WTC11 (cell line): ENCODE measurements at regions of chr19 and their contacts with region 1.

Region 1: DNA sequence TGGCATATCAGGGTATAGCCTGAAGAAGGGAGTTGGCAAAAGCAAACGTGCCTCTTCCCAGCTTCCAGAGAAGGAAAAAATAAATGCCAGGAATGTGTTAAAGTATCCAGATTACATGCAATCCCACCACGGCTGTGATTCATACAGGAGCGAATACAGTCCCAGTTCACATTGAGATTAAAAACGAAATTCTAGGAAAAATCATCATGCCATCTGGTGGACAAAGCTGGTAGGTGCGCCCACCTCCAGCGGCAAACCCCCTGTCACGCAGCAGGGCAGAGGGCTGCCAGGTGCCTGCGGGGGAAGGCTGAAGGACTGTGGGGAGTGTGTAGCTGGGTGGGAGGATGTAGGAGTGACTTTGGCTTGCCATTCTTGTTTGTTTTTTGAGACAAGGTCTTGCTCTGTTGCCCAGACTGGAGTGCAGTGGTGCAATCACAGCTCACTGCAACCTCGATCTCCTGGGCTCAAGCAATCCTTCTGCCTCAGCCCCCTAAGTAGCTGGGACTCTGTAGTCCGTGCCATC is 6.4 kb upstream of the DMWD start:
- DNase-seq: peak; percentile 75
- ATAC-seq: peak; percentile 86
- H3K4me3 Mint-ChIP-seq: no peak overlapping the region; the same call in 1 of the 2 replicates
- H3K27ac Mint-ChIP-seq: no peak overlapping the region
- H3K4me1 Mint-ChIP-seq: peaks cover 6% of the 10 kb centered on the region
- H3K27me3 Mint-ChIP-seq: peaks cover 57% of the 10 kb centered on the region
- CTCF ChIP-seq: peak; percentile 71

Region 2: DNA sequence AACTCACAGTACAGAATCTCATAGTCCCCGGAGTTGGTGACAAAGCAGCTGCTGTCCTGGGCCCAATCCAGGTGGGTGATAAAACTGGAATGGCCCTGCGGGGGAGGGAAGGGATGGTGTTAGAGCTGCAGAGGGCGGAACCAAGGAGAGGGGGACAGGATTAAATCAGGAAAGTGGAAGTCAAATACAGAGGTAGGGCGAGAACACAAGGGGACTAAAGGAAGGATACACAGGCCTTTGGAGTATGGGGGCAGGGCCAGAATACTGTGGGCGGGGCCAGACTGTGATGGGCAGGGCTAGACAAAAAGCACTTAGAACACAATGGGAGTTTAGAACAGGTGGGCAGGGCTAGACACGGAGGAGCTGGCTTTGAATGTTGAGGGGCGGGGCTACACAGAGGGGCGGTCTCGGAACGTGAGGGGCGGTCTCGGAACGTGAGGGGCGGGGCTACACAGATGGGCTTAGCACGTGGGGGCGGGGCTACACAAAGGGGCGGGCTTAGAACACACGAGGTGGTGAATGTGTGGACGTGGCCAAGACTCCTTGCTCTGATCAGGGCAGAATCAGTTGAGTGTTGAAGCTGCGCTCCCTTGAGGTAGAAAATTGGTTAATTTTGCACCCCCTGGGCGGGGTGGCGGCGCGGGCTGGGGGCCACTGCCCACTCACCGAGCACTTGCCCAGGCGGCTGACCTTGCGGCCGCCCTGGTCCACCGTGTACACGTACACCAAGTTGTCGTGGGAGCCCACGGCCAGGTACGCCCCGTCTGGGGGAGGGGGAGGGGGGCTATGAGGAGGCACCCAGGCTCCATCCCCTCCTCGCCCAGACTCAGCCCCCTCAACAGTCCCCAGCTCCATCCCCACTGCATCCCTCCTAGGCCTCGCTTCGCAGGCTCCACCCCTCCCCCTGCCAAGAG is 183.0 kb before region 1 on chr19:
- CTCF ChIA-PET with region 1: no interaction called
- POLR2A ChIA-PET with region 1: no interaction called
- DNase-seq: peak; percentile 99
- ATAC-seq: peak; percentile 96
- H3K4me3 Mint-ChIP-seq: peak overlapping the region; percentile 86
- H3K27ac Mint-ChIP-seq: peak overlapping the region; percentile 99
- H3K4me1 Mint-ChIP-seq: 0 out of 2 replicates have a peak, but pooled peaks cover 7% of the 10 kb centered on the region
- H3K27me3 Mint-ChIP-seq: no peaks in the 10 kb centered on the region
- CTCF ChIP-seq: no peak

Region 3: DNA sequence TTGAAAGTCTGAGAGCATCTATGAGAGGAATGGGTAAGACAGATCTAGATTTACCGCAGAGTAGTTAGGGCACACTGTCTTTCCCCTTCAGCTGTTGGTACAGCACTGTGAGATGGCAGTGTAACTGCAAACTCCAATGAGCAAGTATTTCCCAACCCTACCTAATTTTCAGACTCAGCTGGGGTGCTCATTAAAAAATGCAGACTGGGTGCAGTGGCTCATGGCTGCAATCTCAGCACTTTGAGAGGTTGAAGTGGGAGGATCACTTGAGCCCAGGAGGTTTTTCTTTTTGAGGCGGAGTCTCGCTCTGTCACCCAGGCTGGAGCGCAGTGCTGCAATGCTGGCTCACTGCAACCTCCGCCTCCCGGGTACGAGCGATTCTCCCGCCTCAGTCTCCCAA is 93.9 kb before region 1 on chr19:
- CTCF ChIA-PET with region 1: no interaction called
- POLR2A ChIA-PET with region 1: no interaction called
- DNase-seq: no peak
- ATAC-seq: 0 out of 2 replicates have a peak, but pooled peaks have one; percentile 13
- H3K4me3 Mint-ChIP-seq: no peak overlapping the region
- H3K27ac Mint-ChIP-seq: no peak overlapping the region; the same call in 1 of the 2 replicates
- H3K4me1 Mint-ChIP-seq: no peaks in the 10 kb centered on the region
- H3K27me3 Mint-ChIP-seq: no peaks in the 10 kb centered on the region
- CTCF ChIP-seq: no peak

Region 4: GRCh38 chr19:45809643-45810159 is 10.6 kb after region 1 on chr19:
- CTCF ChIA-PET with region 1: interaction called, 133 read pairs
- POLR2A ChIA-PET with region 1: interaction called, 3 read pairs
- DNase-seq: no peak
- ATAC-seq: peak; percentile 55; the same call in 1 of the 2 replicates
- H3K4me3 Mint-ChIP-seq: no peak overlapping the region
- H3K27ac Mint-ChIP-seq: peak overlapping the region; percentile 66
- H3K4me1 Mint-ChIP-seq: peaks cover 19% of the 10 kb centered on the region
- H3K27me3 Mint-ChIP-seq: peaks cover 19% of the 10 kb centered on the region
- CTCF ChIP-seq: no peak